CD4-positive, alpha-beta T cell (primary cell): ENCODE measurements at regions of chr1 and their contacts with region 1.

Region 1: GRCh38 chr1:190608282-190608681 is 130.6 kb upstream of the BRINP3 start:
- DNase-seq: no peak
- ATAC-seq: no peak
- H3K4me3 ChIP-seq: no peak overlapping the region
- H3K4me3 Mint-ChIP-seq: no peak overlapping the region
- H3K27ac ChIP-seq: no peak overlapping the region
- H3K27ac Mint-ChIP-seq: no peak overlapping the region
- H3K4me1 ChIP-seq: no peaks in the 10 kb centered on the region
- H3K4me1 Mint-ChIP-seq: no peaks in the 10 kb centered on the region
- H3K27me3 ChIP-seq: no peaks in the 10 kb centered on the region
- H3K27me3 Mint-ChIP-seq: no peaks in the 10 kb centered on the region
- CTCF ChIP-seq: no peak

Region 2: DNA sequence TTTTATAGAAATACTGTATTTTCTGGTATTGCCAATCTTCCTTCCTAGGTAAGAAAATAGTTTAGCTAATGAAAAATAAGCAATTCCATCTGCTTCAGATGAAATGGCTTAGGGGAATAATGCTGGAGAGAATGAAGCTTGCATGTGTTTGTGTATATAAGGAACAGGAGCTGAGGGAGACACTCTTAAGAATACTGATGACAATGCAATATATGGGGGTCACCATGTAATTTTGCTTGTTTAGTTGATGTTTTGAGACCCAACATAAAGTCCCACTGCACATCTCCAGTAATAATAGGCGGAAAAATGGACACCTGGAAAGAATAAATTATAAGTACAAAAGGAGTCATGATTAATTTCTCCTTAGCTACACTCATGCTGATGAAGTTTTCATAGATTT is 19.9 kb before region 1 on chr1:
- CTCF ChIA-PET with region 1: no interaction called
- POLR2A ChIA-PET with region 1: no interaction called
- intact Hi-C with region 1: no loop called
- DNase-seq: no peak
- ATAC-seq: no peak
- H3K4me3 ChIP-seq: no peak overlapping the region
- H3K4me3 Mint-ChIP-seq: no peak overlapping the region
- H3K27ac ChIP-seq: no peak overlapping the region
- H3K27ac Mint-ChIP-seq: no peak overlapping the region
- H3K4me1 ChIP-seq: no peaks in the 10 kb centered on the region
- H3K4me1 Mint-ChIP-seq: no peaks in the 10 kb centered on the region
- H3K27me3 ChIP-seq: no peaks in the 10 kb centered on the region
- H3K27me3 Mint-ChIP-seq: no peaks in the 10 kb centered on the region
- CTCF ChIP-seq: no peak

Region 3: DNA sequence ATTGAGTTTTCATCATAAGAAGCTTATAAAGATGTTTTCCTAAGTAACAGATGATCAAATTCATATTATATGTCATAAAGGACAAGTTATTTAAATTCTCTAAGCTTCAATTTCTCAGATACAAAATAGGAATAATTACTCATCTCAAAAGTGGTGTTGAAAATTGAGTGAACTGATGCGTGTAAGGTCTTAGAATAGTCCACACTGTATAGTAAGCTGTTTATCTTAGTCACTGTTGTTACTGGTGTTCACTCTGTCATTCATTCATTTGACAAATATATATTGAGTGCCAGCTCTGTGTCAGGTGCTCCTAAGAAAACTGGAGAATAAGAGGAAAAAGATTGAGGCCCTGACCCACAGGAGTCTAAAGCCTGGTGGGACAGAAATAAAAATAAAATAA is 55.7 kb after region 1 on chr1:
- CTCF ChIA-PET with region 1: no interaction called
- POLR2A ChIA-PET with region 1: no interaction called
- intact Hi-C with region 1: loop called in 1 of 2 experiments (anchors 10 kb)
- DNase-seq: no peak
- ATAC-seq: no peak
- H3K4me3 ChIP-seq: no peak overlapping the region
- H3K4me3 Mint-ChIP-seq: no peak overlapping the region
- H3K27ac ChIP-seq: no peak overlapping the region
- H3K27ac Mint-ChIP-seq: no peak overlapping the region
- H3K4me1 ChIP-seq: no peaks in the 10 kb centered on the region
- H3K4me1 Mint-ChIP-seq: no peaks in the 10 kb centered on the region
- H3K27me3 ChIP-seq: no peaks in the 10 kb centered on the region
- H3K27me3 Mint-ChIP-seq: no peaks in the 10 kb centered on the region
- CTCF ChIP-seq: no peak